Breast epithelium (tissue), 4 donors: ENCODE measurements at regions of chrX and their contacts with region 1.

Region 1: DNA sequence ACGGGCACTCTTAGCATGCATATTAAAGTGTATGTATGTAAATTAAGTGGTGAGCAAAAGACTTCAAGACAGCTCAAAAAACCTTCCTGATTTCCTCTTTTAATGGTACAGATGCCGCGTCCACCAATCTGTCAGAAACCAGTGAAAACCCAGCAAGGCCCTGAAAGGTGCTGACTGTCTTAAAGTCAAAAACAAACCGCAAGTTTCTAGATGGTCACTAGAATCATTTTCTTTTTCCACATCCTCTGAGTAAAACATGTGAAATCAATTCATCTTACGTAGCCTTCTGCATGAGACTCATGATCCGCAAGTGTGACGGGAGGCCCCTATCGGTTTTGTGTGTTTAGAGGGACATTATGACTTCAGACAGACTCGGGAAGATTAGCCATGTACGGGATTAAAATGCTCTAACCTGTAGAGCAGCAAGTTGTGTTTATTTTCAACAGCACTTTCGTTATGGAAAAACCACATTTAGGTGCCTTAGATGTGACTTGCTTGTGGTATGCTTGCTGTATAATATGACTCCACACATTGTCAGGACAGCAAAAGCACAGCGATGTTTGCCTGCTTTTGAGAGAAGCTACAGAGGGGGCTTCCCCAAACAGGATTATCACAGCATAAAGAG is 88.2 kb upstream of the STS start:
- DNase-seq: no peak
- H3K4me3 ChIP-seq: no peak overlapping the region
- H3K27ac ChIP-seq: no peak overlapping the region
- H3K4me1 ChIP-seq: no peaks in the 10 kb centered on the region
- H3K27me3 ChIP-seq: no peaks in the 10 kb centered on the region
- CTCF ChIP-seq: no peak
- POLR2A ChIP-seq: no peak

Region 2: DNA sequence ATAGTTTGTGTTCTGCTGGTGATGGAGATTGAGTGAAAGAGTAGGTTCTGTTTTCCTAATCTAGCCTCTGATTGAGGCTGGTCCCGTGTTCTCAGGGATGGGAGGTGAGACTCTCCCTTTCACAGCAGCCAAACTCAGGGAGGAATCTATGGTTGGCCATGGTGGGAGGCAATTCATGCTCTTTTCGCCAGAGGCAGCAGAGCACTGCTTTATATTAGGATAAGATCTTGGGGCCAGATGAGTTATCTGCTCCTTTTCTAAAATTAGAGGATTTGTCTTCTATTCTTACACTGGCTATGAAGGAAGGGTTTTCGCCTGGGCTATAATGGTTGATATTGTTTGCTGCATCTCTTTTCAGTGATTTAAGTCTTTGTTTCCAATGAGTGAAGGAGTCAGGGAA is 766.7 kb before region 1 on chrX:
- intact Hi-C with region 1: no loop called
- DNase-seq: no peak
- H3K4me3 ChIP-seq: no peak overlapping the region
- H3K27ac ChIP-seq: no peak overlapping the region
- H3K4me1 ChIP-seq: no peaks in the 10 kb centered on the region
- H3K27me3 ChIP-seq: peaks cover 0 to 3% of the 10 kb centered on the region in 2 donors
- CTCF ChIP-seq: no peak
- POLR2A ChIP-seq: no peak

Region 3: DNA sequence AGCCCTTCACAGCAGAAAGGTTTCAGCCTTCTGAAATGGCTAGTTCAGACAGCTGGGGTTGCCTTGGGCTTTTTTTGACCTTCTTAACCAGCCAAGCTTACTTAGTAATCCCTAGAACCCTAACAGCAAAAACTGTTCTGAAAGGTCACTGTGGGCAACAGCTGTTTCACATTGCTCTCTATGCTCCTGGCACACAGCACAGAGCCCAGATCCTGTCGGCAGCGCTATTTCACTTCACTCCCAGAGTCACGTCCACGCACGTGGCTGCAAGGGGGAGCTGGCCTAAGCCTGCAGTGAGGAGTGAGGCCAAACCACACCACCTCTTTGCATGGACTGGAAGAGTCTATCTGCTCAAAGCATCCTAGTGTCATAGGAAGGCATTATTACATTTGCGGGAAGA is 56.2 kb after region 1 on chrX:
- intact Hi-C with region 1: loop called (anchors 2 kb)
- DNase-seq: no peak
- H3K4me3 ChIP-seq: no peak overlapping the region
- H3K27ac ChIP-seq: no peak overlapping the region
- H3K4me1 ChIP-seq: no peaks in the 10 kb centered on the region
- H3K27me3 ChIP-seq: no peaks in the 10 kb centered on the region
- CTCF ChIP-seq: no peak
- POLR2A ChIP-seq: no peak